Heart left ventricle (tissue), 16 donors: ENCODE measurements at regions of chr9 and their contacts with region 1.

Region 1: DNA sequence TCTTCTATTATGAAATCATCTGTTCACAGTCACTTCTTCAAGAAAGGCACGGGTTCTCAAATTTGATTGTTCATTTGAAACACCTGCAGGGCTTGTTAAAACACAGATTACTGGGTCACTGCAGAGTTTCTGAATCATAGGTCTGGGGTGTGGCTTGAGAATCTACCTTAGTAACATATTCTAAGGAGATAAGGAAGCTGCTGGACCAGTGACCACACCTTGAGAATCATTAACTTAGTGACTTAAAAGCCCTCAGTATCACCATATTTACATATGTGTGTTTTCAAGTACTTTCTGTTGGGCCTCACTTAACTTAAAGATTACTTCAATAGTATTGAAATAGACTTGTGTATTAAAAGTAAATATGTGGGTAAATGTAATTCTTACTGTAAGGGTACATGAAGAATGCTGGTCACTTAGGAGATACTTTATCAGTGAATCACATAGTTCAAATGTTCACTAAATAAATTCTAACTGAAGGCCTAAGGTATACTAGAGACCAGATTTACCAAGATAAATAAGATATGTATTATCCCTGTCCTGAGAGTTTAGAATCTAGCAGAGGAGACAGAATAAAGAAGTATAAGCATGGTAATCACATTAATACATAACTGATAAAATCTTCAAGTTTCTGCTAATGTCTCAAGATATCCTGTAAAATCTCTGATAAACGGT is 1342.1 kb upstream of the C9orf72 start:
- DNase-seq: no peak
- ATAC-seq: no peak
- H3K4me3 ChIP-seq: no peak overlapping the region
- H3K27ac ChIP-seq: no peak overlapping the region
- H3K4me1 ChIP-seq: no peaks in the 10 kb centered on the region
- H3K27me3 ChIP-seq: no peaks in the 10 kb centered on the region
- CTCF ChIP-seq: no peak
- POLR2A ChIP-seq: no peak

Region 2: GRCh38 chr9:28951944-28952343 is 36.6 kb after region 1 on chr9:
- intact Hi-C with region 1: loop called in 1 of 10 experiments (anchors 5 kb)
- DNase-seq: no peak
- ATAC-seq: no peak
- H3K4me3 ChIP-seq: no peak overlapping the region
- H3K27ac ChIP-seq: no peak overlapping the region
- H3K4me1 ChIP-seq: no peaks in the 10 kb centered on the region
- H3K27me3 ChIP-seq: no peaks in the 10 kb centered on the region
- CTCF ChIP-seq: no peak
- POLR2A ChIP-seq: no peak

Region 3: GRCh38 chr9:28967226-28967625 is 51.8 kb after region 1 on chr9:
- intact Hi-C with region 1: loop called in 1 of 10 experiments (anchors 10 kb)
- DNase-seq: no peak
- ATAC-seq: no peak
- H3K4me3 ChIP-seq: no peak overlapping the region
- H3K27ac ChIP-seq: no peak overlapping the region
- H3K4me1 ChIP-seq: no peaks in the 10 kb centered on the region
- H3K27me3 ChIP-seq: no peaks in the 10 kb centered on the region
- CTCF ChIP-seq: no peak
- POLR2A ChIP-seq: no peak